PC-9 (cell line): ENCODE measurements at regions of chr7 and their contacts with region 1.

Region 1: GRCh38 chr7:12686894-12687717 is at the start of gene ARL4A:
- DNase-seq: peak; percentile 97 to 100
- H3K4me3 ChIP-seq: peak within 1 kb of the TSS; percentile 77
- H3K27ac ChIP-seq: peak within 1 kb of the TSS; percentile 63
- H3K4me1 ChIP-seq: peaks cover 15% of the 10 kb centered on the region; the same call in 1 of the 2 replicates
- H3K27me3 ChIP-seq: no peaks in the 10 kb centered on the region
- CTCF ChIP-seq: peak; percentile 56; the same call in 1 of the 2 replicates
- total RNA-seq, gene ARL4A: 17.9 and 18.0 TPM in 2 replicates

Region 2: GRCh38 chr7:12609561-12609960 is 77.5 kb before region 1 on chr7:
- CTCF ChIA-PET with region 1: no interaction called
- POLR2A ChIA-PET with region 1: no interaction called
- intact Hi-C with region 1: no loop called
- DNase-seq: no peak
- H3K4me3 ChIP-seq: no peak overlapping the region
- H3K27ac ChIP-seq: no peak overlapping the region
- H3K4me1 ChIP-seq: no peaks in the 10 kb centered on the region
- H3K27me3 ChIP-seq: no peaks in the 10 kb centered on the region
- CTCF ChIP-seq: no peak

Region 3: DNA sequence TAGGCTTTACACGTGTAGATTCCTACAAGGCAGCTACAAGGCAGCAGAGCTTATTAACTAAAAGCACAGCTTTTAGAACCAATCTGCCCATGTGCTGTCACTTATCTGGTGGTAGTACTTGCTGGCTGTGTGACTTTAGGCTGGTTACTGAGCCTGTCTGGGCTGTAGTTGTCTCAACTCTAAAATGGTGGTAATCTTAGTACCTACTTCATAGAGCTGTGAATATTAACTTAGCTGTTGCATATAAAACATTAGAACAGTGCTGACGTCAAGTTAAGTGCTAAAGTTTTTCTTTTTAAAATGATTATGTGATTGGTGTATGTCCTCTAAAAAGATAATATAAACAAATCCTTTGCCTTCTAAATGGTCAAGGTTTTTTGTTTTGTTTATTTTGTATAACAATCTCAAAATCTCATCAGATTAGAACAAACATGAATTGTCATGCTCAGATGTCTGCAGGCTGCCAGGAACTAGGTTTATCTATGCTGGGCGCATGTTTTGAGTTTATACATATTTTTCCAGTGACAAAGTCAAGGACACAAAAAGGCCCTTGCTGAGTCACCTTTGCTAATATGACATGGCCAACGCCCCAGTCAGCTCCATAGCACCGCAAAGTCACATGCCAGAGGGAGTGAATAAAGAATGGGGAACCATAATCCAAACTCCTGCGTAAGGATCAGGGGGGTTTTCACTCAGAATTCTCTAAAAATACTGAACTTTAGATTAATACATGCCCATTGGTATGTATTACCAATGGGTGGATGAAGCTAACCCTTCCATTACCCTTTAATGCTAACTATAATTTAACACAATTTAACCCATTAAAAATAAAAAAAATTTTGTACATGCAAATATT is 39.5 kb before region 1 on chr7:
- CTCF ChIA-PET with region 1: interaction called, 14 read pairs
- POLR2A ChIA-PET with region 1: interaction called, 12 read pairs
- intact Hi-C with region 1: loop called (anchors 1 kb)
- DNase-seq: peak; percentile 80 to 92
- H3K4me3 ChIP-seq: no peak overlapping the region
- H3K27ac ChIP-seq: peak overlapping the region; percentile 51
- H3K4me1 ChIP-seq: peaks cover 34% of the 10 kb centered on the region
- H3K27me3 ChIP-seq: no peaks in the 10 kb centered on the region
- CTCF ChIP-seq: no peak

Region 4: DNA sequence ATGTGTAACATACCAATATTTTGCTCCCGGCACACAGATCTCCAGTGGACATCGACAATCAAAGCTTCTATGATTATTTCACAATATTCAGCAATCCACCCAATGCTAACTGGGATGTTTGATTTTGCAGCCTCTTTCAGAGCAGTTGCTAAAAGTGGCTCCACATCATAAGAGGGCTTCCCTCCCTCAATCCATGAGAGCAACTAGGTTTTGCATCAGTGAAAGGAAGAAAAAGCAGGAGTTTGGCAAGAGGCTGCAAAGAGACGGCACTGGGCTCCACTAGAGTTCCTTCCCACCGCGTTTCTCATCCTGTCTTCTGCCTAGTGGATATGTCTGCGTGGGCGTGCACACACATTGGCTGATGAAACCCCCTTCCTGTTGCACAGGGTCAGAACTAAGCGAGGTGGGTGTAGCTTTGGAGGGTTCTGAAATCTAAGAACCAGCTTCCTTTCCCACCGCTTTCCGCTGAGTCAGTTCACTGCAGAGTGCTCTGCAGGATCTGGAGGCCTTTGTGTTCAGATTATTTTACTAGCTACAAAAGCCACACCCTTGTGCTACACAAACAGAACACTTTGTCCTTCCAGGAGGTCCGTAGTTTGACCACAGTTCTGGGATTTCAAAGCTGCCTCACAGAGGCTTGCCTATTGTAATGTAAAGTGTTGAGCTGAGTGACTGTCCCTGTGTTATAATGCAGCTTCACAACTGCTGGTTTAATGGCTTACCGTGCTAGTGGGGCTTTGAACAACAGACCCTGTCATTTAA is 28.4 kb after region 1 on chr7:
- CTCF ChIA-PET with region 1: interaction called, 5 read pairs
- POLR2A ChIA-PET with region 1: interaction called, 8 read pairs
- intact Hi-C with region 1: loop called (anchors 2 kb)
- DNase-seq: peak; percentile 49 to 59
- H3K4me3 ChIP-seq: no peak overlapping the region
- H3K27ac ChIP-seq: no peak overlapping the region
- H3K4me1 ChIP-seq: peaks cover 15% of the 10 kb centered on the region
- H3K27me3 ChIP-seq: no peaks in the 10 kb centered on the region
- CTCF ChIP-seq: no peak

Region 5: DNA sequence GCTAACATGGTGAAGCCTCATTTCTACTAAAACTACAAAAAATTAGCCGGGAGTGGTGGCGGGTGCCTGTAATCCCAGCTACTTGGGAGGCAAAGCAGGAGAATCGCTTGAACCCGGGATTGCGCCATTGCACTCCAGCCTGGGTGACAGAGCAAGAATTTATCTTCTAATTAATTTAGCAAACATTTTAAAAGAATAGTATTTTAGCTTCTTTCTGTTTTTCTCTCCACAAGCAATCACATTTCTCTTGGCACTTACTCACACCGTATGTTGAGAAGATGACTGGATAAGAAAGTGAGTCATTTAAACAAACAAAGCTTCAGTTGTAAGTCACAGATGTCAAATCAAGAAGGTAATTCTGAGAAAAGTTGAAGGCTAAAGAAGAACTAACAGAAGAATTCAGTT is 264.3 kb after region 1 on chr7:
- CTCF ChIA-PET with region 1: interaction called, 4 read pairs
- POLR2A ChIA-PET with region 1: no interaction called
- intact Hi-C with region 1: loop called (anchors 1 kb)
- DNase-seq: peak; percentile 3 to 78
- H3K4me3 ChIP-seq: no peak overlapping the region
- H3K27ac ChIP-seq: no peak overlapping the region
- H3K4me1 ChIP-seq: peaks cover 12% of the 10 kb centered on the region
- H3K27me3 ChIP-seq: no peaks in the 10 kb centered on the region
- CTCF ChIP-seq: no peak

Region 6: GRCh38 chr7:13179102-13179501 is 492.0 kb after region 1 on chr7:
- CTCF ChIA-PET with region 1: no interaction called
- POLR2A ChIA-PET with region 1: no interaction called
- intact Hi-C with region 1: loop called (anchors 5 kb)
- DNase-seq: no peak
- H3K4me3 ChIP-seq: no peak overlapping the region
- H3K27ac ChIP-seq: no peak overlapping the region
- H3K4me1 ChIP-seq: no peaks in the 10 kb centered on the region
- H3K27me3 ChIP-seq: no peaks in the 10 kb centered on the region
- CTCF ChIP-seq: no peak